Naive thymus-derived CD4-positive, alpha-beta T cell (primary cell): ENCODE measurements at regions of chr1 and their contacts with region 1.

Region 1: GRCh38 chr1:37595440-37596319 is at the start of gene GNL2:
- DNase-seq: peak; percentile 91 to 97 (median 95)
- ATAC-seq: peak; percentile 99
- H3K4me3 ChIP-seq: peak within 1 kb of the TSS; percentile 81
- H3K4me3 Mint-ChIP-seq: peak within 1 kb of the TSS; percentile 96 to 100 (median 99)
- H3K27ac ChIP-seq: peak within 1 kb of the TSS; percentile 86
- H3K27ac Mint-ChIP-seq: peak within 1 kb of the TSS; percentile 92 to 99 (median 98)
- H3K4me1 ChIP-seq: peaks cover 12 to 22% of the 10 kb centered on the region in 2 donors
- H3K4me1 Mint-ChIP-seq: peaks cover 17 to 43% (median 33%) of the 10 kb centered on the region in 7 donors
- H3K27me3 ChIP-seq: no peaks in the 10 kb centered on the region
- H3K27me3 Mint-ChIP-seq: peaks cover 0 to 12% (median 0%) of the 10 kb centered on the region in 5 donors
- total RNA-seq, gene GNL2: 33.3 to 60.9 (median 56.0) TPM

Region 2: GRCh38 chr1:36463803-36464604 is 1131.7 kb before region 1 on chr1 and contains the start of gene MRPS15:
- CTCF ChIA-PET with region 1: no interaction called
- POLR2A ChIA-PET with region 1: no interaction called
- intact Hi-C with region 1: loop called in 1 of 2 experiments (anchors 10 kb)
- DNase-seq: peak; percentile 85 to 95 (median 93)
- ATAC-seq: peak; percentile 99
- H3K4me3 ChIP-seq: peak within 1 kb of the TSS; percentile 85
- H3K4me3 Mint-ChIP-seq: peak within 1 kb of the TSS; percentile 86 to 100 (median 97)
- H3K27ac ChIP-seq: peak within 1 kb of the TSS; percentile 91
- H3K27ac Mint-ChIP-seq: peak within 1 kb of the TSS; percentile 90 to 99 (median 98)
- H3K4me1 ChIP-seq: peaks cover 7 to 13% of the 10 kb centered on the region in 2 donors
- H3K4me1 Mint-ChIP-seq: peaks cover 18 to 54% (median 43%) of the 10 kb centered on the region in 7 donors
- H3K27me3 ChIP-seq: no peaks in the 10 kb centered on the region
- H3K27me3 Mint-ChIP-seq: no peaks in the 10 kb centered on the region
- total RNA-seq, gene MRPS15: 30.2 to 84.0 (median 36.3) TPM

Region 3: DNA sequence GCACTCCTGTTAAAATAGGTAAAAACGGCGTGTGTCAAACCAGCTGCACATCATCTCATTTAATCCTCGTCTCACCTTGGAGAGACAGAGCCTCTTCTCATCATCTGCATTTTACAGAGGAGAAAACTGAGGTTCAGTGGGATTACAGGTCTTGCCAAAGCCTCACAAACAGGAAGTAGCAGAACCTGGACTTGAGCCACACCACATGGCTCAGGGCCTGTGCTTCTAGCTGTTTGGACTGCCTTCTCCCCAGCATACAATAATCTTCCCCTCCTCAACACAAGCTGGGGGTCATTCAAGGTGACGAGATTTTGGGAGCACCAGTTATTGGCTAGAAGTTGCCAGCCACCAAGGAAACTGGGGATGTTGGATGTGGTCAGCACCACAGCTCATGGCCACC is 289.2 kb before region 1 on chr1:
- CTCF ChIA-PET with region 1: no interaction called
- POLR2A ChIA-PET with region 1: no interaction called
- intact Hi-C with region 1: no loop called
- DNase-seq: no peak
- ATAC-seq: no peak
- H3K4me3 ChIP-seq: no peak overlapping the region
- H3K4me3 Mint-ChIP-seq: no peak overlapping the region
- H3K27ac ChIP-seq: no peak overlapping the region
- H3K27ac Mint-ChIP-seq: no peak overlapping the region
- H3K4me1 ChIP-seq: no peaks in the 10 kb centered on the region
- H3K4me1 Mint-ChIP-seq: peaks cover 0 to 2% (median 0%) of the 10 kb centered on the region in 7 donors
- H3K27me3 ChIP-seq: no peaks in the 10 kb centered on the region
- H3K27me3 Mint-ChIP-seq: peaks cover 0 to 47% (median 26%) of the 10 kb centered on the region in 5 donors

Region 4: GRCh38 chr1:37474046-37474759 is 121.5 kb before region 1 on chr1 and contains the start of gene ZC3H12A:
- CTCF ChIA-PET with region 1: no interaction called
- POLR2A ChIA-PET with region 1: interaction called, 8 read pairs
- intact Hi-C with region 1: loop called (anchors 1 to 5 kb)
- DNase-seq: peak; percentile 87 to 98 (median 93)
- ATAC-seq: peak; percentile 82
- H3K4me3 ChIP-seq: peak within 1 kb of the TSS; percentile 97
- H3K4me3 Mint-ChIP-seq: peak within 1 kb of the TSS; percentile 91 to 99 (median 96)
- H3K27ac ChIP-seq: peak within 1 kb of the TSS; percentile 95
- H3K27ac Mint-ChIP-seq: peak within 1 kb of the TSS; percentile 93 to 99 (median 98)
- H3K4me1 ChIP-seq: peaks cover 28 to 33% of the 10 kb centered on the region in 2 donors
- H3K4me1 Mint-ChIP-seq: peaks cover 43 to 59% (median 54%) of the 10 kb centered on the region in 7 donors
- H3K27me3 ChIP-seq: no peaks in the 10 kb centered on the region
- H3K27me3 Mint-ChIP-seq: no peaks in the 10 kb centered on the region
- total RNA-seq, gene ZC3H12A: 35.0 to 122 (median 46.7) TPM

Region 5: DNA sequence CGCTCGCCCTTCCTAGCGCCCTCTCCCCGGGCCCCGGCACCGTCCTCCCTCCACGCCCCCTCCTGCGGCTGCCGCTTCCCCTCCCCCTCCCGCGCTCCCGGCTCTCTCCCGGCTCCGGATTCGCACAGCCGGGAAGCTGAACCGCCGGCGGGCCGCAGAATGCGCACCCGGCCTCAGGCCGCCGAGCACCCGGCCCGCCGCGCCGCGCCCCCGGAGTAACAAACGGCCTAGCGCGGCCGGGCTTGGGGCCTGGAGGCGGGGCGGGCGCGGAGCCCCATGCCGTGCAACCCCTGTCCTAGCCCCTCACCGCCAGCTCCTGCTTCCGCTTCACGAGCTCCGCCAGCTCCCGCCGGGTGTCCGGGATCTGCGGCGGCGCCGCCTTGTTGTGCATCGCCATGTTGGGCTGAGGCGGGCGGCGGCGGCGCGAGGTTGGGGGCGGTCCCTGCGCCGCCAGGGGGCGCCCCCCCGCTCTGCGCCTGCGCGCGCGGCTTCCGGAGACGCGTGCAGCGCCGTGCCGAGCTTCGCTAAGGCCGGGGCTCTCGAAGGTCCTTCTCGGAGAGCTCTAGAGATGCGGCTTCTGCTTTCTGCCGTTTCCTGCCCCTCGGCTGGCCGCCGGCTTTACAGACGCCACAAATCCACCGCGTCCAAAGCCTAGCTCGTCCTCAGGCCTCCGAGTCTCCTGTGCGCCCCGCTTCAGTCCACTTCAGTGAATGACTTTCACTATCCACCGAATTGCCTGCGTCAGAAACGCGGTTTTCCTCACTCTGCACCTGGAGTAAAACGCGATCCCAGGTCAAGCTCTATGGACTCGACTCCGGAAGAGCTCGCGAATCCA is 81.1 kb before region 1 on chr1 and contains the start of gene MEAF6:
- CTCF ChIA-PET with region 1: no interaction called
- POLR2A ChIA-PET with region 1: interaction called, 6 read pairs
- intact Hi-C with region 1: loop called (anchors 1 to 10 kb)
- DNase-seq: peak; percentile 76 to 92 (median 87)
- ATAC-seq: peak; percentile 99
- H3K4me3 ChIP-seq: peak within 1 kb of the TSS; percentile 87
- H3K4me3 Mint-ChIP-seq: peak within 1 kb of the TSS; percentile 92 to 99 (median 98)
- H3K27ac ChIP-seq: peak within 1 kb of the TSS; percentile 89
- H3K27ac Mint-ChIP-seq: peak within 1 kb of the TSS; percentile 93 to 99 (median 98)
- H3K4me1 ChIP-seq: peaks cover 16 to 22% of the 10 kb centered on the region in 2 donors
- H3K4me1 Mint-ChIP-seq: peaks cover 10 to 50% (median 43%) of the 10 kb centered on the region in 7 donors
- H3K27me3 ChIP-seq: no peaks in the 10 kb centered on the region
- H3K27me3 Mint-ChIP-seq: peaks cover 0 to 4% (median 0%) of the 10 kb centered on the region in 5 donors
- total RNA-seq, gene MEAF6: 45.0 to 89.5 (median 57.7) TPM

Region 6: GRCh38 chr1:37682334-37682987 is 86.8 kb after region 1 on chr1:
- CTCF ChIA-PET with region 1: interaction called, 60 read pairs
- POLR2A ChIA-PET with region 1: interaction called, 3 read pairs
- intact Hi-C with region 1: loop called in 1 of 2 experiments (anchors 2 kb)
- DNase-seq: peak; percentile 61 to 80 (median 74)
- ATAC-seq: peak; percentile 95
- H3K4me3 ChIP-seq: no peak overlapping the region
- H3K4me3 Mint-ChIP-seq: no peak overlapping the region
- H3K27ac ChIP-seq: no peak overlapping the region
- H3K27ac Mint-ChIP-seq: peak overlapping the region in 6 of 9 donors; percentile 61 to 93 (median 75)
- H3K4me1 ChIP-seq: no peaks in the 10 kb centered on the region
- H3K4me1 Mint-ChIP-seq: peaks cover 0 to 9% (median 4%) of the 10 kb centered on the region in 7 donors
- H3K27me3 ChIP-seq: no peaks in the 10 kb centered on the region
- H3K27me3 Mint-ChIP-seq: peaks cover 0 to 3% (median 0%) of the 10 kb centered on the region in 5 donors

Region 7: GRCh38 chr1:37859507-37860345 is 264.0 kb after region 1 on chr1 and contains the start of gene MTF1:
- CTCF ChIA-PET with region 1: interaction called, 3 read pairs
- POLR2A ChIA-PET with region 1: interaction called, 4 read pairs
- intact Hi-C with region 1: loop called (anchors 1 kb)
- DNase-seq: peak; percentile 85 to 98 (median 97)
- ATAC-seq: peak; percentile 99
- H3K4me3 ChIP-seq: peak within 1 kb of the TSS; percentile 94
- H3K4me3 Mint-ChIP-seq: peak within 1 kb of the TSS; percentile 89 to 100 (median 96)
- H3K27ac ChIP-seq: peak within 1 kb of the TSS; percentile 89
- H3K27ac Mint-ChIP-seq: peak within 1 kb of the TSS; percentile 90 to 99 (median 95)
- H3K4me1 ChIP-seq: peaks cover 12 to 19% of the 10 kb centered on the region in 2 donors
- H3K4me1 Mint-ChIP-seq: peaks cover 26 to 39% (median 33%) of the 10 kb centered on the region in 7 donors
- H3K27me3 ChIP-seq: no peaks in the 10 kb centered on the region
- H3K27me3 Mint-ChIP-seq: no peaks in the 10 kb centered on the region
- total RNA-seq, gene MTF1: 22.9 to 45.2 (median 27.1) TPM